ENCODE measurements at regions of chr2 and their contacts with region 1.

Region 1: DNA sequence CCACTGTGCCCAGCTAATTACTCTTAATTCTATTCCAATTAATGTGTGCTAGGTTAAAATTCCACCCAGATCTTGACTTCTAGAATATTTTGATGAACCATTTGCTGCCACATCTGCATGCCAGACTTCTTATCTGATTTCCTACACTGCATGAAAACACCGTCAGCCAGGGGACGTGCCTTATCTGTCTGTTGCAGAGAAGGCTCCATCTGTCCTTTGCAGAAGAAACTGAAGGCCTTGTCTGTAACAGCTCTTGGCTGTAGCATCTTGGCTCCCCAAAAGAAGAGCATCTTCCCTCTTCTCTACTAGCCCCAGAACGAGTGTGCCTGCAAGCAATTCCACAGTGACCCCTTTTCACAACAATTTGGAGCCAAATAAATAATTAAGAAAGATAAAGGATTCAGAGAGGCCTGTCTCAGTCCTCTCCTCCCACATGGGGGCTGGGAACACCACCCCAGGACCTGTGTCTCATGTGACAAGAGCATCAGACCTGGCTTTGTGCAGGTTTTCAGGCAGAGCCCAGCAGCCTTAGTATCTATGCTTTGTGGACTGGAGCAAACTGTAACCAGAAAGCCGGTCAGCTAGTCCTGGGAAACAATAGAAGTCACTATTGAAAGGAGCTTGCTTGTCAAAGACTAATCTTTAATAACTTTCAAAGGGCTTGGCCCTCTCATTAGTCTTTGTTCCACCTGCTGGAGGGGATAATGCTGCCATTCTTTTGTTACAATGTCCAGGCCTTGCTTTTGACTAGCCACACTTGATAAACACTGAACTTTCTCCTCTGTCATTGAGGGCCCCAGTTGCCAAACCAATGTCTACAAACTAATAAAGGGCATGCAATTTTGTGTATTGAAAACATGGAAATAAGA is 84.0 kb upstream of the NEUROD1 start:
- DNase-seq: peak; percentile 36 to 78 (median 59)
- ATAC-seq: peak; percentile 97
- H3K4me3 ChIP-seq: no peak overlapping the region
- H3K27ac ChIP-seq: no peak overlapping the region
- H3K4me1 ChIP-seq: peaks cover 0 to 12% of the 10 kb centered on the region in 2 experiments; a peak in 4 of 5 replicates
- H3K27me3 ChIP-seq: no peaks in the 10 kb centered on the region
- CTCF ChIP-seq: peak in 2 of 3 experiments; percentile 35 to 47; a peak in 3 of 6 replicates
- EP300 ChIP-seq: peak; percentile 59; the same call in 1 of the 2 replicates
- POLR2A ChIP-seq: no peak
- RAD21 ChIP-seq: peak; percentile 74 to 75

Region 2: DNA sequence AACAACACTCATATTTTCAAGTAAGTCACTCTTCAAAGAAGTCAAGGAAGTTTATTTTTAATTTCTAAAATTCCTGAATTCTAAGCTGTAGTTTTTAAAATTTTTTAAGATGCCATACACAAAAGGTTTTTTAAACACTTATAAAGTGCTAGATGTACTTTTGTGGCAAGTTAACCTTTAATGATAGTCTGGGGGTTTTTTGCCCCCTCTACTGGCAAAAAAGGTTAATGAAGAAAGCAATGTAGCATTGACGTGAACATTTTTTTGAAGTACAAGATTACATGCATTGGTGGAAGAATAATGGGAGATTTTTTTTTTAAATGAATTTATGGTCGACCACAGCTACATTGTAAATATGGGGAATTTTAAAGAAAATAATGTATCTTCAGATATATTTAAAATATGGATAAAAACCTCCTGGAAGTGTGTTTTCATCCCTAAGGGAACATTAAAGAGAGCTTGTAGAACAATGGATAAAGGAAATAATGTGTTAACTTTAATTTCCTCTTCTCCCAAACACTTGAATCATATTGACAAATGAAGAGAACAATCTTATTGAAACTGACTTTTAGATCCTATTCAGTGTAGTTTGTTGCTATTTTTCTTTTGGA is 139.8 kb after region 1 on chr2:
- CTCF ChIA-PET with region 1: no interaction called
- POLR2A ChIA-PET with region 1: no interaction called
- in situ Hi-C with region 1: no loop called
- intact Hi-C with region 1: loop called (anchors 5 kb)
- DNase-seq: peak; percentile 38 to 62 (median 42)
- ATAC-seq: peak; percentile 79
- H3K4me3 ChIP-seq: no peak overlapping the region
- H3K27ac ChIP-seq: no peak overlapping the region
- H3K4me1 ChIP-seq: peaks cover 0 to 7% of the 10 kb centered on the region in 2 experiments; a peak in 2 of 5 replicates
- H3K27me3 ChIP-seq: no peaks in the 10 kb centered on the region
- CTCF ChIP-seq: peak; percentile 45 to 78 (median 54); a peak in 5 of 6 replicates
- EP300 ChIP-seq: no peak
- POLR2A ChIP-seq: no peak
- RAD21 ChIP-seq: peak; percentile 82

Measured in K562 (cell line).